Heart left ventricle (tissue), 16 donors: ENCODE measurements at regions of chr21 and their contacts with region 1.

Region 1: DNA sequence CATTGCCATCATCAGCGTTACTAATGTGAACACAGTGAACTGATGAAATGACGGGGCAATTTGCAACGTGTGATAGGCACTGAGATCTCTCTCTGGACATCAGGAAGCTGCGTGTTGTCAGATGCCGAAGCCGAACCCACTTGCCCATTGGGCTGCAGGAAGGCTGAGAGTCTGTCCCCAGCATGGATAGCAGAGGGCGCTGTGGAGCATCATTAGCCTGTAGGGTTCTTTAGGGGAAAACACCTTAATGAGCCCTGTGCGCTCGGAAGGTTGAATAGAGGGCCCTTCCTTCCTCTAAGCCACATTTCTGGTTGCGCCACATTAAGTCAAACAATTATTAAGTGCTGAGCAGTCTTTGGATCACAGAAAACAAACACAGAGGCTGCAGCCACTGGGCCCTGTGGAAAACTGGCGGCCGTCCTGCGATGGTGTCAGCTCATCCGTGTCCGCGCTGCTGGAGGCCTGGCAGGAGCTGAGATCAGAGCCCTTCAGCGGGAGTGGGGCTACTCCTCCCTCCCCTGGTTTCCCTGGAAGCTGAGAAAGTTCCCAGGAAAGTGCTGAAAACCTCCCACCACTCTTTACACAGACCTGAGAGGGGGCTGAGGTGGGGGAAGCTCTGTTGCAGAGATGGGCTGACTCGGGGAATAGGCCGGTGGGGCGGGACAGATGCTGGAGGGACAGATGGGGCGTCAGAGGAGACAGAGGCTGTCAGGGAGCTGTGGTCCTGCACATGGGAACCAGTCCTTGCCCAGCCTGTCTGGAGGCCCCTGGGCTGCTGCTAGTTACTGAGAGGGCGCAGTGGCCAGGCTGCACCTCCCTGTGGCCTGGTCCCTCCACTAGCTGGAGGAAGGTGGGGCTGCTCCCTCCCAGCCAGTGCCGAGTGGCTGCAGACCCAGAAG is 12.7 kb downstream of the TFF2 start:
- DNase-seq: peak in 4 of 5 donors; percentile 47 to 62 (median 56)
- ATAC-seq: peak in 3 of 4 donors; percentile 56 to 86 (median 78)
- H3K4me3 ChIP-seq: no peak overlapping the region
- H3K27ac ChIP-seq: no peak overlapping the region
- H3K4me1 ChIP-seq: peaks cover 0 to 6% (median 0%) of the 10 kb centered on the region in 12 donors
- H3K27me3 ChIP-seq: peaks cover 0 to 26% (median 8%) of the 10 kb centered on the region in 9 donors
- CTCF ChIP-seq: peak; percentile 31 to 68 (median 61)
- POLR2A ChIP-seq: no peak

Region 2: GRCh38 chr21:42156690-42157577 is 181.1 kb before region 1 on chr21:
- intact Hi-C with region 1: loop called in 1 of 10 experiments (anchors 10 kb)
- DNase-seq: peak in 1 of 5 donors; percentile 45
- ATAC-seq: peak in 1 of 4 donors; percentile 36
- H3K4me3 ChIP-seq: no peak overlapping the region
- H3K27ac ChIP-seq: no peak overlapping the region
- H3K4me1 ChIP-seq: peaks cover 0 to 5% (median 0%) of the 10 kb centered on the region in 12 donors
- H3K27me3 ChIP-seq: peaks cover 0 to 18% (median 0%) of the 10 kb centered on the region in 9 donors
- CTCF ChIP-seq: no peak
- POLR2A ChIP-seq: no peak

Region 3: DNA sequence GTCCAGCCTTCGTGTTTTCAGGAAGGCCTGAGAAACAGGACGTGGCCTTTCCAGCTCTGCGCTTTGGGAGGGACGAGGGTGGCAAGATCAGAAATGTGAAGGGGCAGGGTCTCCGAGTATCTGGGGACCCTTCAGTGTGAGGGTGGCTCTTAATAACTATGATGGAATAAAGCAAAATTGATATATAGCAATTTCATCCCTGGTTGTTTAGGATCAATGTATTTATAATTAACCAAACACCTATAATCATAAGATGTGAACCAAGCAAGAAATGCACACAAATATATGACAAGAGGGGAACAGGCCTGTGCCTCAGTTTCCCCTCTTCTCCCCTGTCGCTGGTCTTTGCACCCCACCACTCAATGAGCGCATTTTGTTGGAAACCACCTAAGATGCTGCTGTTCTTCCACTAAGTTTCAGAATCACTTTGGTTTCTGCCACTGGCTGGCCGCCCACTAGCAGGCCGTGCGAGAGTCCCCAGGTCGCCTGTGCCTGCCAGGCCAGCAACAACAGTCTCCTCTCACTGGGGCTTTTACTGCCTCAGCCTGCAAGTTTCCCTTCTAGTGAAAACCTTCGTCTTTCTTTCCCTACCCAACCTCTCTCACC is 102.2 kb after region 1 on chr21:
- intact Hi-C with region 1: loop called in 6 of 10 experiments (anchors 5 to 10 kb)
- DNase-seq: no peak
- ATAC-seq: no peak
- H3K4me3 ChIP-seq: no peak overlapping the region
- H3K27ac ChIP-seq: no peak overlapping the region
- H3K4me1 ChIP-seq: no peaks in the 10 kb centered on the region
- H3K27me3 ChIP-seq: peaks cover 0 to 7% (median 0%) of the 10 kb centered on the region in 9 donors
- CTCF ChIP-seq: no peak
- POLR2A ChIP-seq: no peak

Region 4: GRCh38 chr21:42449296-42449927 is 111.3 kb after region 1 on chr21:
- intact Hi-C with region 1: loop called in 6 of 10 experiments (anchors 5 to 10 kb)
- DNase-seq: no peak
- ATAC-seq: peak in 1 of 4 donors; percentile 25
- H3K4me3 ChIP-seq: no peak overlapping the region
- H3K27ac ChIP-seq: no peak overlapping the region
- H3K4me1 ChIP-seq: peaks cover 0 to 6% (median 0%) of the 10 kb centered on the region in 12 donors
- H3K27me3 ChIP-seq: peaks cover 0 to 9% (median 0%) of the 10 kb centered on the region in 9 donors
- CTCF ChIP-seq: no peak
- POLR2A ChIP-seq: no peak